Adrenal gland (tissue), 19 donors: ENCODE measurements at regions of chr11 and their contacts with region 1.

Region 1: GRCh38 chr11:17978553-17979287 is 34.1 kb downstream of the SERGEF start:
- DNase-seq: peak; percentile 60 to 87 (median 72)
- H3K4me3 ChIP-seq: no peak overlapping the region
- H3K27ac ChIP-seq: no peak overlapping the region
- H3K4me1 ChIP-seq: no peaks in the 10 kb centered on the region
- H3K27me3 ChIP-seq: no peaks in the 10 kb centered on the region
- CTCF ChIP-seq: peak; percentile 68 to 81 (median 71)
- POLR2A ChIP-seq: no peak

Region 2: DNA sequence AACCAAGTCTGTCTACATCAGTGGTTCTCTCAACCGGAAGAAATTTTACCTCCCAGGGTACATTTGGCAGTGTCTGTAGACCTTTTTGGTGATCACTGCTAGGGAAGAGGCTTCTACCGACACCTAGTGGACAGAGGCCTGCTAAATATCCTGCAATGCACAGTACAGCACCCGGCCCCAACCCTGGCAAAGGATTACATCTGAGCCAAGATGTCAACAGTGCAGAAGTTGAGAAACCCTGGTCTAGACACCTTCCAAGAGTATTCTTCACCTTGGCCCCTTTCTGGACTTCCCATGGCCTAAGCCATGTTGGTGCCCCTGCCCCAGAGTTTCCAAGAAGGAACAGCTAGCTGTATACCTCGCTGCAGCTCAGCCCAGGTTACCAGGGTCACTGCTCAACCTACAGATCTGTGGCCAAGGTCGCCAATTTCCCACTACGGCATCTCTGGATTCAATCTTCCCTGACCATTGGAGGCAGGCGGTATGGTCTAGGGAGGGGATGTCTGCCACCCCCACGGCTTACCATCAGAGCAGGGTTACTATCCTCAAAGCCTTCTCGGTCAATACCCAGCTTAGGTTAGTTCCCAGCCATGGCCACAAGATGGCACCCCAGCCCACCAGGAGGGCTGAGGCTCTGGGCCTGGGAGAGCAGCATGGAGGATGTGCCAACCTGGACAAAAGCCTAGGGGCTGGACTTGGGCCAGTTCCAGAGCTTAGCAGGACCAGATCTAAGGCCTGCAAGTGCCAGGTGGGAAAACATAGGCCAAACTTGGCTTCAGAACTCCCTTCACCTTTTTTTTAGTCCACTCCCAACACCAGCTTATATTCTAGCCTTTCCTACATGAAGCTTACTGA is 247.9 kb before region 1 on chr11:
- intact Hi-C with region 1: loop called (anchors 2 to 5 kb)
- DNase-seq: peak; percentile 85 to 95 (median 89)
- H3K4me3 ChIP-seq: no peak overlapping the region
- H3K27ac ChIP-seq: no peak overlapping the region
- H3K4me1 ChIP-seq: peaks cover 8 to 9% of the 10 kb centered on the region in 2 donors
- H3K27me3 ChIP-seq: peaks cover 4% of the 10 kb centered on the region
- CTCF ChIP-seq: peak; percentile 77 to 95 (median 90)
- POLR2A ChIP-seq: no peak

Region 3: GRCh38 chr11:17760102-17761029 is 218.4 kb before region 1 on chr11:
- intact Hi-C with region 1: loop called (anchors 5 to 10 kb)
- DNase-seq: peak in 6 of 7 donors; percentile 30 to 66 (median 50)
- H3K4me3 ChIP-seq: no peak overlapping the region
- H3K27ac ChIP-seq: no peak overlapping the region
- H3K4me1 ChIP-seq: no peaks in the 10 kb centered on the region
- H3K27me3 ChIP-seq: no peaks in the 10 kb centered on the region
- CTCF ChIP-seq: peak; percentile 15 to 71 (median 55)
- POLR2A ChIP-seq: no peak